GM12878 (cell line): ENCODE measurements at regions of chr2 and their contacts with region 1.

Region 1: DNA sequence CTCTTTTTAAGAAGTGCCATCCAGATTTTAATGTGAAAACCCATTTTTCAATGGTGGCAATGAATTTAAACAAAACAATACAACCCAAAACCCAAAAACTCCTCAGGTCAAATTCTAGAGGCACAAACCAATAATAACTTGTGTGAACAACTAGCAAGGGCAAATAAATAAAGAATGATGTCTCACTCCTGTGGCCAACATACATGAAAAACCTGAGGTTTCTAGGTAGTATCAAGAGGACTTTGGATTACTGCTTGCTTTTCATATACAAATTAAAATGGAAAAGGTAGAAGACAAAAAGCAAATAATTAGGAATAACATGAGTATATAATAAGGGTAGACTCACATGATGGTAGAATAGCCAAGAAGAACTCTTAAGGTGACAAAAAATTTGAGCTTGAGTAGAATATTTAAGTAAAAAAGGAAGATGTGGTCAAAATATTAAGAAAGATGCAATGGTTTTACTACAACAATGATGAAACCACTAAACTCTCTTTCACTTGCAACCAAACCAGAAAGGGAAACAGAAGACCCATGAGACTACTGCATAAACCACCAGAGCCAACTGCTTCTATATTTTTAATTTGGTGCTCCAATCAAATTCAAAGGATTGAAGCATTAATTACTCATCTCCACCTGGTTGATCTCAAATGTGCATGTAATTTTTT is 53.5 kb downstream of the DARS1 start:
- DNase-seq: no peak
- ATAC-seq: peak; percentile 95
- H3K4me3 ChIP-seq: no peak overlapping the region
- H3K27ac ChIP-seq: no peak overlapping the region
- H3K4me1 ChIP-seq: peaks cover 6% of the 10 kb centered on the region
- H3K27me3 ChIP-seq: no peaks in the 10 kb centered on the region
- CTCF ChIP-seq: no peak
- EP300 ChIP-seq: peak; percentile 45 to 53; a peak in 2 of 4 replicates
- POLR2A ChIP-seq: no peak
- RAD21 ChIP-seq: no peak

Region 2: GRCh38 chr2:135913727-135914365 is 18.1 kb before region 1 on chr2:
- CTCF ChIA-PET with region 1: interaction called, 21 read pairs
- POLR2A ChIA-PET with region 1: interaction called, 4 read pairs
- RAD21 ChIA-PET with region 1: interaction called, 11 read pairs
- SMC1A ChIA-PET with region 1: interaction called, 18 read pairs
- in situ Hi-C with region 1: no loop called
- intact Hi-C with region 1: no loop called
- DNase-seq: no peak
- ATAC-seq: peak; percentile 75
- H3K4me3 ChIP-seq: no peak overlapping the region
- H3K27ac ChIP-seq: no peak overlapping the region
- H3K4me1 ChIP-seq: no peaks in the 10 kb centered on the region
- H3K27me3 ChIP-seq: no peaks in the 10 kb centered on the region
- CTCF ChIP-seq: peak; percentile 58 to 68 (median 63); a peak in 5 of 6 replicates
- EP300 ChIP-seq: no peak
- POLR2A ChIP-seq: no peak
- RAD21 ChIP-seq: peak; percentile 75

Region 3: DNA sequence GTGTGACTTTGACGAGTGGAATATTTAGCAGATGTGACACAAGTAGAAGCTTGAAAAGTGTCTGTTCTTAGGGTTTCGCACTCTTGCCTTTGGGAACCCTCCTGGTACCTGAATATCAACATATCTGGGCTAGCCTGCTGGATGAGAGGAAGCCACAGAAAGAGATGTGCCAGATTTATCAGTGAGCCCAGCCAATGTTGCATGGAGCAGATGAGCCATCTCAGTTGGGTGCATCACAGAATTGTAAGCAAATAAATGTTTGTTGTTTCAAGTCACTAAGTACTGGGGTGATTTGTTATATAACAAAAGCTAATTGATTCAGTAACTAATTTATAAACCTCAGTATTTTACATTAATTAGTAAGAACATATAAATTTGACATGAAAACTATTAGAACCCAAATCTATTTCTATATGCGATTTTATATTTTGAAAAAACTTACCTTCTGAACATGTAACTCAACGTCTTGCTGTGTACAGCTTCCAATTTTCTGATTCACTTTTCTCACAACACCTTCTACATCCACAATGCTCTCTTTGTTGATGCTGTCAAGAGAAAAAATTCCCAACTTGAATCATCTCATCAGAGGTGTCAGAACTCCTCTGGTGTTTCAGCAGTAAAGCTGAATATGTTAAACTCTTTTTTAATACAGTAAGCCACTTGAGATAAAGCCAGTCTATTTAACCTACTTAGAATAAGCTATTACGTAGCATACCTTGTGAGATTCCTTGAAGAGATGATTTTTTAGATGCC is 11.2 kb after region 1 on chr2:
- CTCF ChIA-PET with region 1: interaction called, 4 read pairs
- POLR2A ChIA-PET with region 1: interaction called, 8 read pairs
- RAD21 ChIA-PET with region 1: interaction called, 10 read pairs
- SMC1A ChIA-PET with region 1: interaction called, 28 read pairs
- in situ Hi-C with region 1: no loop called
- intact Hi-C with region 1: no loop called
- DNase-seq: no peak
- ATAC-seq: no peak
- H3K4me3 ChIP-seq: no peak overlapping the region
- H3K27ac ChIP-seq: no peak overlapping the region
- H3K4me1 ChIP-seq: no peaks in the 10 kb centered on the region
- H3K27me3 ChIP-seq: no peaks in the 10 kb centered on the region
- CTCF ChIP-seq: no peak
- EP300 ChIP-seq: no peak
- POLR2A ChIP-seq: no peak
- RAD21 ChIP-seq: no peak

Region 4: GRCh38 chr2:135948642-135949355 is 16.9 kb after region 1 on chr2:
- CTCF ChIA-PET with region 1: interaction called, 8 read pairs
- POLR2A ChIA-PET with region 1: interaction called, 8 read pairs
- RAD21 ChIA-PET with region 1: interaction called, 10 read pairs
- SMC1A ChIA-PET with region 1: interaction called, 28 read pairs
- in situ Hi-C with region 1: no loop called
- intact Hi-C with region 1: no loop called
- DNase-seq: no peak
- ATAC-seq: peak; percentile 81
- H3K4me3 ChIP-seq: no peak overlapping the region
- H3K27ac ChIP-seq: no peak overlapping the region
- H3K4me1 ChIP-seq: peaks cover 3% of the 10 kb centered on the region
- H3K27me3 ChIP-seq: no peaks in the 10 kb centered on the region
- CTCF ChIP-seq: no peak
- EP300 ChIP-seq: peak in 1 of 2 experiments; percentile 78; a peak in 1 of 4 replicates
- POLR2A ChIP-seq: no peak
- RAD21 ChIP-seq: no peak

Region 5: DNA sequence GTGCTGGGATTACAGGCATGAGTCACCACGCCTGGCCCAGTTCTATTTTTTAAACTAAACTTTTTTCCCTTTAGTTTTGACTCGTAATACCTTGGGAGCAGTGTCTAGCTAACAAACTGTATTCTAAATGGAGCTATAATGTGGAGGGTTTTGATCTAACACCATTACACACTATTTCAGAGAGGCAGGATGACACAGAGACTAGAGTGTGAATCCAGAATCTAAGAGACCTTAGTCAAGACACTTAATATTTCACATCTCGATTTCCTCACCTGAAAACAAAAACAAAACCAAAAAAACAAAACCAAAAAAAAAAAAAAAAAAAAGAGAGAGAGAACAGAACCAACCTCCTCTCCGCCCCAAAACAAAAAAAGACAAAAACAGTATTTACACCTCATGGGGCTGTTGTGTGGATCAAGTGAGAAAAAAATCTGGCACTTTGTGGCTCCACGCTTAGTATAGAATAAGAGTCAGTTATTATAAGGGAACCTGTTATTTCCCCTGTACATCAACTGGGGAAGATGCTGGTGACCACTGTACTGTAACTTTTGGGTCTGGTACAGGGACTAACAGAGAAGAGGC is 22.2 kb after region 1 on chr2:
- CTCF ChIA-PET with region 1: interaction called, 8 read pairs
- POLR2A ChIA-PET with region 1: interaction called, 6 read pairs
- RAD21 ChIA-PET with region 1: interaction called, 9 read pairs
- SMC1A ChIA-PET with region 1: interaction called, 28 read pairs
- in situ Hi-C with region 1: no loop called
- intact Hi-C with region 1: no loop called
- DNase-seq: no peak
- ATAC-seq: peak; percentile 29; the same call in 1 of the 3 replicates
- H3K4me3 ChIP-seq: no peak overlapping the region
- H3K27ac ChIP-seq: no peak overlapping the region
- H3K4me1 ChIP-seq: no peaks in the 10 kb centered on the region; the same call in 1 of the 2 replicates
- H3K27me3 ChIP-seq: no peaks in the 10 kb centered on the region
- CTCF ChIP-seq: no peak
- EP300 ChIP-seq: no peak
- POLR2A ChIP-seq: no peak
- RAD21 ChIP-seq: no peak

Region 6: DNA sequence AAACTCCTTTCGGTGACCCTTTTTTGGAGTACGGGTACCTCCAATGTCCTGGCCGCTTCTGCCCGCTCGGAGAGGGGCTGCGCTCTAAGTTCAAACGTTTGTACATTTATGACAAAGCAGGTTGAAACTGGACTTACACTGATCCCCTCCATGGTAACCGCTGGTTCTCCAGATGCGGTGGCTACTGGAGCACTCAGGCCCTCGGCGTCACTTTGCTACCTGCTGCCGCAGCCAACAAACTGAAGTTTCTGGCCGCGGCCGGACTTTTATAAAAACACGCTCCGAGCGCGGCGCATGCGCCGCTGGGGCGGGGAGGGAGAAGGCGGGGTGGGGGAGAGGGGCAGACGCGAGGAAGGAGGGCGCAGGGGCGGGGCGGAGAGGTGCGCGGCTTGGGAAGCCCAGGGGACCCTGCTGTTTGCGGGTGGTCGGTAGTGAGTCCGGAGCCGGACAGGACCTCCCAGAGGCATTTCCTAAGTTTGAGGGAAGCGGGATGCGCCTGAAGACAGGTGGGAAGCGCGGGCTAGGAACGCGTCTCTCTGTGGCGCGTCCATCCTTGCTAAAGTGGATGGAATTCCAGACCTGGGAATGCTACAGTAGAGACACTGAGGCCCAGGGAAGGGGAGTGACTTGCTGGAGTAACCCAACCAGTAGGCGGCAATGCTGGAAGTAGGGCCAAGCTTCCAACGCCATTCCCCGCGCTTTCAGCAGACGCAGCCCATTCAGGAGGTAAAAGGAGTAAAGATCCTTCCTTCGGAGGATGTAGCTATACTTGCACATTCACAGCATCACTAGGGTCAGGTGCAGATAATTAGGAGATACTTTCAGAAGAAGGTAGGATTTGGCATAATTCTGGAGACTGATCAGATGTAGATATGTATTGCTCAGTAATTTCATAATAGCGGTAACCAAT is 186.3 kb after region 1 on chr2 and contains the start of gene CXCR4:
- CTCF ChIA-PET with region 1: no interaction called
- POLR2A ChIA-PET with region 1: interaction called, 5 read pairs
- RAD21 ChIA-PET with region 1: no interaction called
- SMC1A ChIA-PET with region 1: interaction called, 7 read pairs
- in situ Hi-C with region 1: no loop called
- intact Hi-C with region 1: loop called (anchors 5 kb)
- DNase-seq: no peak
- ATAC-seq: peak; percentile 43
- H3K4me3 ChIP-seq: peak within 1 kb of the TSS; percentile 85
- H3K27ac ChIP-seq: peak within 1 kb of the TSS; percentile 40; the same call in 1 of the 2 replicates
- H3K4me1 ChIP-seq: peaks cover 2% of the 10 kb centered on the region; the same call in 1 of the 2 replicates
- H3K27me3 ChIP-seq: peaks cover 0 to 12% of the 10 kb centered on the region in 2 experiments
- CTCF ChIP-seq: peak in 1 of 3 experiments; percentile 19; a peak in 1 of 6 replicates
- EP300 ChIP-seq: no peak
- POLR2A ChIP-seq: peak; percentile 97
- RAD21 ChIP-seq: 0 out of 2 replicates have a peak, but pooled peaks have one; percentile 9
- polyA plus RNA-seq, gene CXCR4: 31.1 to 32.3 TPM